Sciatic nerve (tissue), 2 donors: ENCODE measurements at regions of chr2 and their contacts with region 1.

Region 1: DNA sequence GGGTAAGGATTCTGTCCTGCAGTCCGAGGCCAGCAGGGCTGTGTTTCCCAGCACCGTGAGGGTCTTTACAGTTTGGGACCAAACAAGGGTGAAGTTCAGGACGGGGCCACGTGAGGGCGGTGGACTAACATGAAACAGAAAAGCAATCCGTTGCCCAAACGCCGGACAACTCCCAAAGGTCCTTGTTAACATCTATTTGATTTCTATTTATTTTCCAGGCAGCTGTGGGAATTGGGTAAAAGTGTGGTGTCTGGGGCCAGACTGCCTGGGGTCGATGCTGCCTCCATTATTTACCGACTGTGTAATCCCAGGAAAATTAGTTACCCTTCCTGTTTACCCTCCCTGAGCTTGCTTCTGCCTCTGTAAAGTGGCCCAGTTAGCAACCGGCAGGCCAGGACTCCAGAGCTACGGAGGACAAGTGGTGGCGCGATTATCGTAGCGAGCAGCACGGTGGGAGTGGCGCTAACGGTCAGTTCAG is 66.3 kb upstream of the TCF7L1 start:
- DNase-seq: peak; percentile 86
- ATAC-seq: peak; percentile 88

Region 2: DNA sequence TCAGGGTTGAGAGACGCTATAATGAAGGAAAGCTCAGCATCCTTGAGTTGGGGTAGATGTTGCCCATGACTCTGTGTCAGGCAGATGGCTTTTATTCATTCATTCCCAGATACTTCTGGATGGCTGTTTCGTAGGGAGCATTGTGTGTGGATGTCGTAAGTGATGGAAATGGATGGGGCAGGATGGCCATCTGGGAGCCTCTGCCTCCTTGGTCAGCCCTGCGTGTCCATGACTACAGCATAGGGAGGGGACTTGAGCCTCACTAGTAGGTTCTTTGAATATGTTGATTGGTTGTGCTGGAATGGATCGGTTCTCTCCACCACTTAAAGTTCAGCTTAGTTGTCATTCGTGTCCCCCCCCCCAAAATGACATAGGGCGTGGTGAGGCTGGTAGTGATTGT is 216.0 kb after region 1 on chr2:
- intact Hi-C with region 1: loop called (anchors 5 kb)
- DNase-seq: no peak
- ATAC-seq: no peak

Region 3: DNA sequence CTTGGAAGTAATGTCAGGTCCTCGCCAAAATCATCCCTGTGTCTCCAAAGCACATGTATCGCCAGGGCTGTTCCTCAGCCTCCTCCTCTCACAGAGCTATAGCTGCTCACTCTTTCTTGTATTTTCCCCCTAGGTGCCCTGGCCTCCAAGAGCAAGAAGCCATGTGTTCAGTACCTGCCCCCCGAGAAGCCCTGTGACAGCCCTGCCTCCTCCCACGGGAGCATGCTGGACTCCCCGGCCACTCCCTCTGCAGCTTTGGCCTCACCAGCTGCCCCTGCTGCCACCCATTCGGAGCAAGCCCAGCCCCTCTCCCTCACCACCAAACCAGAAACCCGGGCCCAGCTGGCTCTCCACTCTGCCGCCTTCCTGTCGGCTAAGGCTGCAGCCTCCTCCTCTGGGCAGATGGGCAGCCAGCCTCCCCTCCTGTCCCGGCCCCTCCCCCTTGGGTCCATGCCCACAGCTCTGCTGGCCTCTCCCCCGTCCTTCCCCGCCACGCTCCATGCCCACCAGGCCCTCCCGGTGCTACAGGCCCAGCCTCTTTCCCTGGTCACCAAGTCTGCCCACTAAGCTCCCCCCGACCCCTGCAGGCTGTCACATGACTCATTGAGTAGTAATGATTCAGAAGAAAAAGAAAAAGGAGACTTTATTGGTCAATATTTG is 242.1 kb after region 1 on chr2:
- intact Hi-C with region 1: loop called (anchors 10 kb)
- DNase-seq: peak; percentile 72
- ATAC-seq: peak; percentile 58